MCF 10A (cell line): ENCODE measurements at regions of chr1 and their contacts with region 1.

Region 1: DNA sequence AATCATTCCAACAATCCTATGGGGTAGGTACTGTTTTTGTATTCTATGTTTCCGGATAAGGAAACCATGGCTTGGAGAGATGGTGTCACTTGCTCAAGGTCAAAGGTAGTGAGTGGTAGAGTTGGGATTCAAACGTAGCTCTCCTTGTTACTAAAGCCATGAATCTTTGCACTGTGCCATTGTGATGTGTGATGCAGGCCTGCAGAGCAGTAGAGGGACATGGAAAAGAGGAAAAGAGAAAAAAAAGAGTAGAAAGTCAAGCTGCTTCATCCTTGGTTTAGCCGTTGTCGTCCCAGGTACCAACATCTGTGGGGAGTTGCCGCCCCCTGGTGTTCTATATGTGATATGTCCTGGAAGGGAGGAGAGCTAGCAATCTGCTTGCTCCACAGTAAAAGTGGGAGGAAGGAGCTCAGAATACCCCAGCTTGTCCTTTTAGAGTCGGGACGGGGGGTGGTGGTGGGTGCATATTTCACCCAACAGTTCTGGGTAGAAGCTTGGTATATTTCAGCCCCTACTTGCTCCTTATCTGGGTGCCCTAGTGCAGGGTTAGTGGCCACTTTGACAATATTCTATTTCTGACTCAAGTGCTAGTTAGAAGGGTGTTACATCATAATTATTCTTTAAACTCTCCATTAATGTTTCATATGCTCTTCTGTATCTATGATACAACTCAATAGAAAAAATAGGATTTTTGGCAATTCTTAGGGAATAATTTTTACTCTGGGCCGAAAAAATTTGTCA is 98.4 kb downstream of the EBNA1BP2 start:
- DNase-seq: peak; percentile 84
- H3K4me3 Mint-ChIP-seq: no peak overlapping the region
- H3K27ac Mint-ChIP-seq: no peak overlapping the region
- H3K4me1 Mint-ChIP-seq: peaks cover 12% of the 10 kb centered on the region
- H3K27me3 Mint-ChIP-seq: no peaks in the 10 kb centered on the region
- CTCF ChIP-seq: peak; percentile 77

Region 2: DNA sequence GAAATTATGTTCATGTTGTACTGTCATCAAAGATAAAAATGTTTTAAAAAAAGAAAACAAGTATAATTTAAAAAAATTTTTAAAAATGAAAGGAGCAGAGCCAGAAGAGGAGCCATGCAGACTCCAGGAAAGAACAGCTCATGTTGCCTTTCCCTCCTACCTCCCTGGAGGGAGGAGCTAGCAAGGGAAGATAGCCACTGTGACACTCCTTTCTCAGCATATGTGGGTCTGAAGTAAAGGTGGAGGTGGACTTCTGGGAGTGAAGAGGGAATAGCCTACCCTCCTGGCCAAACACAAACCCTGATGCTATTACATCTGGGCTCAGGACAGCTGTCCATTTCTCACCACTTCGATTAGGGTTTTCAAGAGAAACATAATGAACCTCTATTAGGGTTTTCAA is 169.2 kb before region 1 on chr1:
- CTCF ChIA-PET with region 1: interaction called, 14 read pairs
- POLR2A ChIA-PET with region 1: interaction called, 3 read pairs
- intact Hi-C with region 1: no loop called
- DNase-seq: no peak
- H3K4me3 Mint-ChIP-seq: no peak overlapping the region
- H3K27ac Mint-ChIP-seq: no peak overlapping the region
- H3K4me1 Mint-ChIP-seq: no peaks in the 10 kb centered on the region
- H3K27me3 Mint-ChIP-seq: peaks cover 2% of the 10 kb centered on the region
- CTCF ChIP-seq: no peak

Region 3: DNA sequence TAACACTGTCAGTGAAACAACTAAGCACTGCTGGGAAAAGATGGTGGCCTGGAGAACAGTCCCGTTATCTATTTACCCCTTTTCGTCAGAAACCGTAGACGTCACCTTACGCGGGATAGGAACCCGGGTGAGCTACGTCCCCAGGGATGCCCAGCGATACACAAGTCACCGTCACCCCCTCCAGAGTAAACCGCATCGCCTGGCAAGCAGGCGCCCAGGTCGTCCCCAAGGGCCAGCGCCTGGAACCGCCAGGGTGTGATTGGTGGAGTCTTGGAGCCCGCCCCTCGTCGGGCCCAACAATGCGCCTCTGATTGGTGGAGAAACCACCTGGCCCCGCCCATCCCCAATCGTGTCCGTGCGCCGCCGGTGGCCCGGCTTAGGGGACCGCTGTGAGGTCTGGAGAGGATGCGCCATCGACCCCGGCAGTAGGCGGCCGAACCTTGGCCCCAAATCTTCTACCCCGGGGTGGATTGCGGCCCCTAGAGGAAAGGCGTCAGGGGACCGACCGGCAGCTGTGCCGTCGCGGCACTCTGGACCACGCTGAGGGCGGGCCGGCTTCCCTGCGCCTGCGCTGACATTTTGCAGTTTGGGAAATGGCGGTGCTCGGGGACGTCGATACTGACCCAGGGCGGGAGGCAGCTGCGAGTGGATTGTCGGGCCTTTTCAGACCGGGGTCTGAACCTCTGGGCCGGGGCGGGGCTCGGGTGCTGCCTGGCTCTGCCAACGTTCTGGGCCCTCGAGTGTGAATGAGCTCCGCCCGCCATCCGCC is 149.4 kb before region 1 on chr1:
- CTCF ChIA-PET with region 1: interaction called, 150 read pairs
- POLR2A ChIA-PET with region 1: interaction called, 22 read pairs
- intact Hi-C with region 1: loop called (anchors 2 kb)
- DNase-seq: no peak
- H3K4me3 Mint-ChIP-seq: peak overlapping the region; percentile 54
- H3K27ac Mint-ChIP-seq: no peak overlapping the region
- H3K4me1 Mint-ChIP-seq: peaks cover 18% of the 10 kb centered on the region
- H3K27me3 Mint-ChIP-seq: no peaks in the 10 kb centered on the region
- CTCF ChIP-seq: no peak

Region 4: GRCh38 chr1:42936309-42937078 is 137.2 kb before region 1 on chr1:
- CTCF ChIA-PET with region 1: interaction called, 39 read pairs
- POLR2A ChIA-PET with region 1: interaction called, 16 read pairs
- intact Hi-C with region 1: loop called (anchors 1 kb)
- DNase-seq: peak; percentile 94
- H3K4me3 Mint-ChIP-seq: peak overlapping the region; percentile 38
- H3K27ac Mint-ChIP-seq: peak overlapping the region; percentile 87
- H3K4me1 Mint-ChIP-seq: peaks cover 72% of the 10 kb centered on the region
- H3K27me3 Mint-ChIP-seq: no peaks in the 10 kb centered on the region
- CTCF ChIP-seq: no peak

Region 5: GRCh38 chr1:43021547-43022474 is 51.8 kb before region 1 on chr1:
- CTCF ChIA-PET with region 1: interaction called, 23 read pairs
- POLR2A ChIA-PET with region 1: interaction called, 12 read pairs
- intact Hi-C with region 1: no loop called
- DNase-seq: peak; percentile 95
- H3K4me3 Mint-ChIP-seq: peak overlapping the region; percentile 41
- H3K27ac Mint-ChIP-seq: no peak overlapping the region
- H3K4me1 Mint-ChIP-seq: peaks cover 25% of the 10 kb centered on the region
- H3K27me3 Mint-ChIP-seq: no peaks in the 10 kb centered on the region
- CTCF ChIP-seq: no peak

Region 6: DNA sequence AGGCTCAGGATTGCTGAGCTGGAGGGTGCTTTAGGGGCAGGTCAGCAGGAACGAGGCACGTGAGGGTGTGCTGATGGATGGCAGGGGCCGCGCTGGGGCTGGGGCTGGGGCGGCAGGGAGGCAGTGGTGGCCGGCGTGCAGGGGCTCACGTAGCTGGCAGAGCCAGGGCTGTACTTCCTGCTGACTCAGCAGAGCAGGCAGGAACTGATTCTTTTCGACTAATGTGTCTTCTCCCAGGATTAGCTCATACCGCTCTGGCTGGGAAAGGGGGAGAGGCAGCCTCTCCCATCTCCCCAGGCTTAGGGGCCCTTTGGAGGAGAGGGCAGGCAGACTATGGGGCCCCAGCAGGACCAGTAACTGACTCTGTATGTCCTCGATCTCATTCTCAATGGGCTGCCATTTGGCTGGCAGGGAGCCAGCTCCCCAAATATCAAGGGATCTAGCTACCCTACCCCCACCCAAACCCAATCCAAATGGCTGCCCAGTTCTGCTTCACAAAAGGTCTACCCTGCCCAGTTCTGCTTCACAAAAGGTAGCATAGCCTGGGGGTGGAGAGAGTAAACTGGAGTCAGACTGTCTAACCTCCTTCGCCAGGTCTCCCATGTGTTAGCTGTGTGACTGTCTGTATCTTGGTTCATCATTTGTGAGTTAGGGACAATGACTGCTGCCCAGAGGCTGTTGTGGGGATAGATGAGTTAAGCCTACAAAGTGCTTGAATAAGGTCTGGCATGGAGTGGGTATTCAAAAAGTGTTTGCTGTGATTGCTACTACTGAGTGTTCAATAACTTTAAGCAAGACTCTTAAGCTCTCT is 14.9 kb before region 1 on chr1:
- CTCF ChIA-PET with region 1: interaction called, 36 read pairs
- POLR2A ChIA-PET with region 1: interaction called, 3 read pairs
- intact Hi-C with region 1: no loop called
- DNase-seq: peak; percentile 44
- H3K4me3 Mint-ChIP-seq: no peak overlapping the region
- H3K27ac Mint-ChIP-seq: no peak overlapping the region
- H3K4me1 Mint-ChIP-seq: no peaks in the 10 kb centered on the region
- H3K27me3 Mint-ChIP-seq: no peaks in the 10 kb centered on the region
- CTCF ChIP-seq: no peak